GM13976 (cell line): ENCODE measurements at regions of chrX and their contacts with region 1.

Region 1: GRCh38 chrX:103157496-103158320 is 57.2 kb upstream of the BEX4 start:
- DNase-seq: peak; percentile 43
- CTCF ChIP-seq: peak; percentile 49

Region 2: DNA sequence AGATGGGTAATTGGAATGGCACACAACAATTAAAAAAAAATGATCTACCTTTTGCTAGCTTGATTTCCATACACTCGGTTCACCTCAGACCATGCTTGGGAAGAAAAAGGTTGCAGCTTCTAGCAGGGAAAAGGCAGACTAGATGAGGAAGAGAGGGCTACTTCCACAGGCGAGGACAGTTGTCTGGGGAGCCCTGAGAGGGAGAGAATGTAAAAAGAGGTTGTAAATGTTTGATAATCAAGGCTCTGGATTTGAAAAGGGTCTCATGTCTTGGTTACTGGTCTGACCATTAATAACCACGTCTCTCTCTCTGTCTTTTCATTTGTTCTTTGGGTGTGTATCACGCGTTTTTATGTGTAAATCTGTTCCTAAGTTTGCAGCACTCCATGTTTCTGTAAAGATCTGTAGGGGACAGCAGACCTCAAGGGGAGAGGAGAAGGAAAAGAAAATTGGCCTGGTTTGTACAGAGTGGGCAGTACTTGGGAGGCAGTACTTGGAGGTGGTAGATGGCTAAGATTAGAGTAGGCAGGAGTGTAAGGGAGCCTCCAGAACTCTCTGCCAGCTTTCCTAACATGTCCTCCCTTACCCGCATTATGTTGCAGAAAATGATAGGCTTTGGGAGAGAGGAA is 557.6 kb before region 1 on chrX:
- in situ Hi-C with region 1: no loop called
- DNase-seq: no peak
- CTCF ChIP-seq: no peak

Region 3: GRCh38 chrX:102950908-102951866 is 206.5 kb before region 1 on chrX:
- in situ Hi-C with region 1: loop called (anchors 25 kb)
- DNase-seq: peak; percentile 20
- CTCF ChIP-seq: peak; percentile 52

Region 4: DNA sequence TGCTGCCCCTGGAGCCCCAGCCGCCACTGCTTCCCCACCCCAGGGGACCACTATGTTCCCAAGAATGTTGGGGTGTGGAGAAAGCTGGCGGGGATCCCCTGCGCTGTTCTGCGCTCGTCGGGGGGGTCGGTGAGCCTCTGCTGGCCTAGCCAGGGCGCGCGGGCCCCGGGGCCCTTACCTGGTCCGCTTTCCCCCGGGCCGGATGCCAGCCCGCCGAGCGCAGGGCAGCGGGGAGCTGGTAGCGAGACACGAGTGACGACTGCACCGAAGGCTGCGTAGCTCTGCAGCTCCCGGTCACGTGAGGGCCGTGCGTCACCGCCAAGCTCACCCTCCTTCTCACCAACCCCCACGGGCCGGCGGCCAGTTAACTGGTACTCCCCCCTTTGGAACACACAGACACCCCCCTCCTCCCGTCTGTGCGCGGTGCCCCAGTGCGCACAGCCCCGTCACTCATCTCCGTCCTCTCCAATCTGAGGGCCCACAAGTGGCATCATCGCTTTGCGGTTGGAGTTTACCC is 93.7 kb before region 1 on chrX and contains the start of gene BEX1:
- in situ Hi-C with region 1: no loop called
- DNase-seq: no peak
- CTCF ChIP-seq: no peak

Region 5: DNA sequence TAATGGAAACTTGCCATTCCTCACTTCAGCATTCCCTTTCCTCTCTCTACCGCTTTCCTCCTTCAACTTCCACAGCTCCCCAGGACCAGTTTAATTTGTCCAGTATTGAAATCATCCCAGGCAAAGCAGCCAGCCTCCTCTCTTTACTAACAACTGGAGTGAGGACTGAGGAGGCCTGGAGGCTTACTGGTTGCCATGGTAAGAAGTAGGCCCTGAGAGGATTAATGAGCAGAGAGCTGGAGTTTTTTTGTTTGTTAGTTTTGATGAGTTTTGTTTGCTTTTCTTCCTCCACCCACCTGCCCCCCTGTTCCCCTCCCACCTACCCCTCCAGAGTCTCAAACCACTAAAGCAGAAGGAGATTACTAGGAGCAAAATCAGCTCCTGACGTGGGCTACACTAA is 589.5 kb after region 1 on chrX:
- in situ Hi-C with region 1: no loop called
- DNase-seq: no peak
- CTCF ChIP-seq: no peak